ENCODE measurements at regions of chr18 and their contacts with region 1.

Region 1: DNA sequence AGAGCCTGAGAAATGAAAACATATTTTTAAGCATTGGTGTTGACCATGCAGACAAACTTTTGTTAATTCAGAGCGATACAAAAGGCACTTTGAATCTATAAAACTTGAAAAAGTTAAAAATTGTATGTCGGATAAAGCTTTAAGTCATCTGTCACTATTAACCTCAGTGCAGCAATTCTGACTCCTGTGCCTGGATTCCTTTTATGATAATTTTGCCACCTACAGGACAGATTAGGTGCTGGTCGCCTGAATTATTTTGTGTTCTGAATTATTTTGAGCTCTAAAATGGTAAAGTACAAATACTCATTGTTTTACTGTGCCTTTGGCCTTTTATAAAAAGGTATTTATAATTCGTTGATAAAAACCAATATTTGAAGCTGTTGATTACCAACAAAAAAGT is 19.4 kb upstream of the RNF138 start:
- DNase-seq: peak in 4 of 5 donors; percentile 43 to 49 (median 48)
- H3K4me3 ChIP-seq: no peak overlapping the region
- H3K4me3 Mint-ChIP-seq: no peak overlapping the region
- H3K27ac ChIP-seq: no peak overlapping the region
- H3K27ac Mint-ChIP-seq: peak overlapping the region in 4 of 7 donors; percentile 13 to 64 (median 58)
- H3K4me1 ChIP-seq: peaks cover 9% of the 10 kb centered on the region
- H3K4me1 Mint-ChIP-seq: peaks cover 5 to 11% (median 8%) of the 10 kb centered on the region in 4 donors
- H3K27me3 ChIP-seq: no peaks in the 10 kb centered on the region
- H3K27me3 Mint-ChIP-seq: no peaks in the 10 kb centered on the region

Region 2: DNA sequence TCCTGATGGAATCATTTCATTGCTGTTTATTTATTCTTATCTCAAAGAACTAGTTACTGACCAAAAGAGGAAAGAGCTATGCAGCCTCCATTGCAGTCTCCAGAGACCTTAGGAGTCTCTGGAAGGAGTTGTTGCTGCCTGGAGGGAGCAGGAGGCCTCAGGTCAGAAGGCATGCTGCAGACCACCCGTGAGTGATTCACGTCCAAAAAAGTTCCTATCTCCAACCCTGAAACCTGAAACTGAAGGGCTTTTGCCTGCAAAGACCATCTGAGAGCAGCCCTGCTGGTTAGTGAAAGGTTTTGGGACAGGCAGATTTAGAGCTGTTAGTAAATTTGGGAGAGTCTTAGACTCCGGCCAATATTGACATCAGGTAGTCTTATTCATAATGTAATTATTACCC is 340.7 kb before region 1 on chr18:
- CTCF ChIA-PET with region 1: no interaction called
- POLR2A ChIA-PET with region 1: no interaction called
- intact Hi-C with region 1: no loop called
- DNase-seq: no peak
- H3K4me3 ChIP-seq: no peak overlapping the region
- H3K4me3 Mint-ChIP-seq: no peak overlapping the region
- H3K27ac ChIP-seq: no peak overlapping the region
- H3K27ac Mint-ChIP-seq: no peak overlapping the region
- H3K4me1 ChIP-seq: no peaks in the 10 kb centered on the region
- H3K4me1 Mint-ChIP-seq: no peaks in the 10 kb centered on the region
- H3K27me3 ChIP-seq: peaks cover 5% of the 10 kb centered on the region
- H3K27me3 Mint-ChIP-seq: peaks cover 14 to 16% of the 10 kb centered on the region in 2 donors

Region 3: DNA sequence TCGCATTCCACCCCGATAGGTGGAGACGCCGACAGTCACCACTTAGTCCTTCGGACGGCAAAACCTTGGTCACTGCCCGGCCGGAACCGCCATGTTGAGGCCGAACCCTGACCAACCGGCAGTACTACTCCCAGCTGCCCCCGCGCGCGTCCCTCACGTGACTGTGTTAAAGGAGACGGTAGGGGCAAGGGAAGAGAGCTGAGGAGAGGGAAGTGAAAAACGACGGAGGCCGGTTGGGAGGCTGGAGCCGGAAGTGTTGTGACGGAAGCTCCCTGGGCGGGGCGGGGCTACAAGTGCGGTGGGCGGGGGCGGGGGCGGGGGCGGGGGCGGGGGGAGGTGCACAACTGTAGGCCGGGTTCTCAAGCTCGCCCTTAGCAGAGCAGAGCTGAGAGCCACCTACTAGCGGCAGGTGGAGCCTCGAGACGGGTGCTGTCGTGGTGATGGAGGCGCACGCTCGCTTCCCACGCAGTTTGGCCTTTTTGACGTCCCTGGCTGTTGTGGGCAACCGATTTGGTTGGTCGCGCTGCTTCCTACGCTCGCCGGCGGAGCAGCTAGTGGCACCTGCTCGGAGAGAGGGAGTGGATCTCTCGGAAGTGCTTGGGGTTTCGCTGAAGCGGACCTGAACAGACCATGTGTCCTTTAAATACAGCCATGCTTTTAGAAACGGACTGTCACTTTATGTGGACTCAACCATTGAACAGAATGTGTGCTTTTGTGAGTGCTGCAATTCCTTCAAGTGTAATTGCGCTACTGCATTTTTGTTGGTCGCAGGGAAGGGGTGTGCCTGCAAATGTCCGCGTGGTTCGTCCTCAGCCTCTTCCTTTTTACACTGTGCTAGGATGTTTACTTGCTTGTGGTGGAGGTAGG is 129.1 kb before region 1 on chr18 and contains the start of gene TRAPPC8:
- CTCF ChIA-PET with region 1: interaction called, 13 read pairs
- POLR2A ChIA-PET with region 1: interaction called, 9 read pairs
- intact Hi-C with region 1: loop called (anchors 1 kb)
- DNase-seq: peak; percentile 92 to 96 (median 95)
- H3K4me3 ChIP-seq: peak within 1 kb of the TSS; percentile 83 to 99
- H3K4me3 Mint-ChIP-seq: peak within 1 kb of the TSS; percentile 98 to 100 (median 99)
- H3K27ac ChIP-seq: peak within 1 kb of the TSS; percentile 95
- H3K27ac Mint-ChIP-seq: peak within 1 kb of the TSS; percentile 98 to 100 (median 99)
- H3K4me1 ChIP-seq: peaks cover 50% of the 10 kb centered on the region
- H3K4me1 Mint-ChIP-seq: peaks cover 32 to 64% (median 46%) of the 10 kb centered on the region in 4 donors
- H3K27me3 ChIP-seq: no peaks in the 10 kb centered on the region
- H3K27me3 Mint-ChIP-seq: no peaks in the 10 kb centered on the region
- total RNA-seq, gene TRAPPC8: 59.4 to 66.3 TPM

Region 4: GRCh38 chr18:32026491-32027086 is 45.7 kb before region 1 on chr18:
- CTCF ChIA-PET with region 1: interaction called, 29 read pairs
- POLR2A ChIA-PET with region 1: interaction called, 3 read pairs
- intact Hi-C with region 1: no loop called
- DNase-seq: no peak
- H3K4me3 ChIP-seq: peak overlapping the region in 1 of 2 donors; percentile 1
- H3K4me3 Mint-ChIP-seq: peak overlapping the region; percentile 68 to 90 (median 75)
- H3K27ac ChIP-seq: no peak overlapping the region
- H3K27ac Mint-ChIP-seq: peak overlapping the region; percentile 52 to 91 (median 79)
- H3K4me1 ChIP-seq: peaks cover 91% of the 10 kb centered on the region
- H3K4me1 Mint-ChIP-seq: peaks cover 58 to 98% (median 77%) of the 10 kb centered on the region in 4 donors
- H3K27me3 ChIP-seq: no peaks in the 10 kb centered on the region
- H3K27me3 Mint-ChIP-seq: no peaks in the 10 kb centered on the region

Region 5: GRCh38 chr18:32048507-32049091 is 23.7 kb before region 1 on chr18:
- CTCF ChIA-PET with region 1: interaction called, 19 read pairs
- POLR2A ChIA-PET with region 1: interaction called, 3 read pairs
- intact Hi-C with region 1: no loop called
- DNase-seq: peak in 1 of 5 donors; percentile 19
- H3K4me3 ChIP-seq: no peak overlapping the region
- H3K4me3 Mint-ChIP-seq: peak overlapping the region in 7 of 8 donors; percentile 4 to 73 (median 44)
- H3K27ac ChIP-seq: peak overlapping the region; percentile 52
- H3K27ac Mint-ChIP-seq: peak overlapping the region in 6 of 7 donors; percentile 14 to 93 (median 90)
- H3K4me1 ChIP-seq: peaks cover 42% of the 10 kb centered on the region
- H3K4me1 Mint-ChIP-seq: peaks cover 30 to 54% (median 42%) of the 10 kb centered on the region in 4 donors
- H3K27me3 ChIP-seq: no peaks in the 10 kb centered on the region
- H3K27me3 Mint-ChIP-seq: no peaks in the 10 kb centered on the region

Region 6: DNA sequence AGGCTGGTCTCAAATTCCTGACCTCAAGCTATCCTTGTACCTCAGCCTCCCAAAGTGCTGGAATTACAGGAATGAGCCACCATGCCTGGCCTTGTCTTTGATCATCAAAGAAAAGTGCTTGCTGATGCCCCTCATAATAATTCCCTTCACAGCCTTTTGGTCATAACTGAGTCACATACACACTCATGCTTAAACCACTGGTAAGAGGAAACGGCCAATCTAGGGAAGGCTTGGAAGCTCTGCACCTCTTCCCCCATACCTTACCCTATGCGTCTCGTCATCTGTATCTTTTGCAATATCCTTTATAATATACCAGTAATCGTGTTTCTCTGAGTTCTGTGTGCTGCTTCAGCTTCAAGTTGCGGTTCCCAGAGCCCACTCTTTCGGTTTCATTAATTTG is 14.5 kb after region 1 on chr18:
- CTCF ChIA-PET with region 1: interaction called, 15 read pairs
- POLR2A ChIA-PET with region 1: interaction called, 31 read pairs
- intact Hi-C with region 1: loop called (anchors 2 kb)
- DNase-seq: no peak
- H3K4me3 ChIP-seq: no peak overlapping the region
- H3K4me3 Mint-ChIP-seq: peak overlapping the region in 2 of 8 donors; percentile 16 to 29
- H3K27ac ChIP-seq: no peak overlapping the region
- H3K27ac Mint-ChIP-seq: peak overlapping the region in 5 of 7 donors; percentile 13 to 95 (median 69)
- H3K4me1 ChIP-seq: peaks cover 44% of the 10 kb centered on the region
- H3K4me1 Mint-ChIP-seq: peaks cover 33 to 53% (median 42%) of the 10 kb centered on the region in 4 donors
- H3K27me3 ChIP-seq: no peaks in the 10 kb centered on the region
- H3K27me3 Mint-ChIP-seq: no peaks in the 10 kb centered on the region

Region 7: GRCh38 chr18:32104530-32104929 is 32.2 kb after region 1 on chr18:
- CTCF ChIA-PET with region 1: interaction called, 12 read pairs
- POLR2A ChIA-PET with region 1: no interaction called
- intact Hi-C with region 1: no loop called
- DNase-seq: no peak
- H3K4me3 ChIP-seq: no peak overlapping the region
- H3K4me3 Mint-ChIP-seq: peak overlapping the region in 1 of 8 donors; percentile 58
- H3K27ac ChIP-seq: no peak overlapping the region
- H3K27ac Mint-ChIP-seq: peak overlapping the region in 1 of 7 donors; percentile 90
- H3K4me1 ChIP-seq: peaks cover 41% of the 10 kb centered on the region
- H3K4me1 Mint-ChIP-seq: peaks cover 24 to 60% (median 43%) of the 10 kb centered on the region in 4 donors
- H3K27me3 ChIP-seq: no peaks in the 10 kb centered on the region
- H3K27me3 Mint-ChIP-seq: no peaks in the 10 kb centered on the region

Region 8: GRCh38 chr18:32261003-32261402 is 188.7 kb after region 1 on chr18:
- CTCF ChIA-PET with region 1: no interaction called
- POLR2A ChIA-PET with region 1: no interaction called
- intact Hi-C with region 1: no loop called
- DNase-seq: no peak
- H3K4me3 ChIP-seq: no peak overlapping the region
- H3K4me3 Mint-ChIP-seq: no peak overlapping the region
- H3K27ac ChIP-seq: no peak overlapping the region
- H3K27ac Mint-ChIP-seq: no peak overlapping the region
- H3K4me1 ChIP-seq: no peaks in the 10 kb centered on the region
- H3K4me1 Mint-ChIP-seq: peaks cover 0 to 4% (median 0%) of the 10 kb centered on the region in 4 donors
- H3K27me3 ChIP-seq: no peaks in the 10 kb centered on the region
- H3K27me3 Mint-ChIP-seq: peaks cover 11 to 17% of the 10 kb centered on the region in 2 donors

Region 9: DNA sequence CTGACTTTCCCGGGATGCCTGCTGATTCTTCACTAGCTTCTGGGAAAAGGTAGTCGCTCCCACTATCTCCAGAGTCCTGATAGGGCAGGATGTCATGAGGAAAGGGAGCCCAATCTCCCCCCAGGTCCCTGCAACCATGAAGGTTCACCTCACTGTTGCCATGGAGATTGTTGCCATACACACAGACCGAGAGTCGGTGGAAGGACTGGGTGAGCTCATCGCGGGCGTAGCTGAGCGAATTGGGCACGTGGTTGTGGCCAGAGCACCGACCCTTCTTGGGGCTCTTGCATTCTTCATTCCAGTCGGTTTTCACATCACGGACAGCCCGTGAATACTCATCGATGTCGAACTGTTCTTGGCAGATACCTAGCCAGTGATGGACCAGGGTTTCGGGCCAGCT is 214.9 kb after region 1 on chr18:
- CTCF ChIA-PET with region 1: no interaction called
- POLR2A ChIA-PET with region 1: no interaction called
- intact Hi-C with region 1: no loop called
- DNase-seq: no peak
- H3K4me3 ChIP-seq: no peak overlapping the region
- H3K4me3 Mint-ChIP-seq: no peak overlapping the region
- H3K27ac ChIP-seq: no peak overlapping the region
- H3K27ac Mint-ChIP-seq: no peak overlapping the region
- H3K4me1 ChIP-seq: no peaks in the 10 kb centered on the region
- H3K4me1 Mint-ChIP-seq: no peaks in the 10 kb centered on the region
- H3K27me3 ChIP-seq: no peaks in the 10 kb centered on the region
- H3K27me3 Mint-ChIP-seq: peaks cover 4 to 5% of the 10 kb centered on the region in 2 donors

Region 10: GRCh38 chr18:32308493-32309120 is 236.3 kb after region 1 on chr18:
- CTCF ChIA-PET with region 1: no interaction called
- POLR2A ChIA-PET with region 1: no interaction called
- intact Hi-C with region 1: no loop called
- DNase-seq: no peak
- H3K4me3 ChIP-seq: no peak overlapping the region
- H3K4me3 Mint-ChIP-seq: no peak overlapping the region
- H3K27ac ChIP-seq: no peak overlapping the region
- H3K27ac Mint-ChIP-seq: no peak overlapping the region
- H3K4me1 ChIP-seq: no peaks in the 10 kb centered on the region
- H3K4me1 Mint-ChIP-seq: peaks cover 0 to 2% (median 0%) of the 10 kb centered on the region in 4 donors
- H3K27me3 ChIP-seq: no peaks in the 10 kb centered on the region
- H3K27me3 Mint-ChIP-seq: no peaks in the 10 kb centered on the region